ENCODE measurements at regions of chr1 and their contacts with region 1.

Region 1: DNA sequence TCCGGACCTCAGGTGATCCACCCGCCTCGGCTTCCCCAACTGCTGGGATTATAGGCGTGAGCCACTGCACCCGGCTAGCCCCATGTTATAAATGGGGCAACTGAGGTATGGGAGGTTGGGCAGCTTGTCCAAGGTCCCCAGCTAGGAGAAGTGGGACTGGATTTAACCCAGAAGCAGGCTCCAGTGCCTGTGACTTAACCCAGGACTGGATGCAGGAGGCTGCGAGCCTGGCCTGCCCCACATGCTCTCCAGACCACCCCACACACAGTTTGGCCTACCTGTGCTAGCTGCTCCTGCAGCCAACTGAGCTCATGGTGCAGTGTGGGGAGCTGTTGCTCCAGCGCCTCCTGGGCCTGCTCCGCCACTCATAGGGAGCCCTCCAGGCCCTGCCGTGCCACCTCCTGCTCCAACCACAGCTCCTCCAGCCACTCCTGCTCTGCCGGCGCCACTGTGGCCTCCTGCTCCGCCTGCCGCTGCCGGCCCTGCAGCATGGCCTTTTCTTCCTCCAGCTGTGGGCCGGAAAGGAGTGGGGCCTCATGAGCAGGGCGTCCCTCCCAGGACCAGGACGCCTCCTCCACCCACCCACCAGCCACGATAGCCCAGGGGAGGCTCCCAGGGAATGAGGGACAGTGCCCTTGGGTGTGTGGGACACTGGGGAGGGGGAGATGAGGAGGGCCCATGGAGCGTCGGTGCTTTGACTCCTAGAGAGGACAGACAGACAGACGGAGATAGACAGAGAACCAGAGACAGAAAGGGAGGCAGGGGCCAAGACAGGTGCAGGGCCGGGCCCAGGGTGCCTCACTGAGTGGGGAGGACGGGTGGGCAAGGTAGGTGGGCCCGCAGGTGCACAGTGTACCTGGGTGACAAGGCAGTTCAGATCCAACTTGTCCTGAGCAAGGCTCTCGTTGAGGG is 12.4 kb upstream of the NBPF1 start:
- DNase-seq: peak in 1 of 2 experiments; percentile 15
- H3K4me3 ChIP-seq: no peak overlapping the region
- H3K4me1 ChIP-seq: peaks cover 1% of the 10 kb centered on the region; the same call in 1 of the 2 replicates
- H3K27me3 ChIP-seq: no peaks in the 10 kb centered on the region

Region 2: DNA sequence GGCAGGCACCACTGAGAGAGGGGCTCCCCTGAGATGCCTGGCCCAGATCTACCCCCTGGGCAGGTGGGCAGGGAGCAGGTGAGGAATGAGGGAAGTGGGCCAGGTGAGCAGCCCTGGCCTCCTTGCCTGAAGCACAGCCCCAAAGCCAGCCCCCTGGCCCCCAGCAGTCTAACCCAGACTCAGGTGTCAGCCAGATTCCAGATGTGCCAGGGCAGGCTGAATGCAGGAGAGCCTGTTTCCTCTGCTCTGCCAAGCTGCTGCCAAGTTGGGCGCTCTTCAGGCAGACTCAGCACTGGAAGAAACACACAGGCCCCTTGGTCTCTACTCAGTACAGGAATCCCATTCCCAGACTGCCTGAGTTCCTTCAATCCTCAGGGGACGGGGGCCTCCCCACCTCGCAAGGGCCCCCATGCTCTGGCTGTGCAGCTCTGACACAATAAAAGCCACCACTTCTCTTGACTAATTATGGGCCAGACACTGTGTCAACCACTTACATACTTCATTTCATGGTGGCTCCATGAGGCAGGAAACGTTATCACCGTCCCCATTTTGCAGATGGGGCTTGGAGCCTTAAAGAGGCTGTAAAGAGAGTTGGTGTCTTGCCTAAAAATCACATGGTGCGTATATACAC is 433.7 kb before region 1 on chr1:
- in situ Hi-C with region 1: no loop called
- DNase-seq: no peak
- H3K4me3 ChIP-seq: no peak overlapping the region
- H3K4me1 ChIP-seq: peaks cover 2% of the 10 kb centered on the region; the same call in 1 of the 2 replicates
- H3K27me3 ChIP-seq: 0 out of 2 replicates have a peak, but pooled peaks cover 3% of the 10 kb centered on the region

Region 3: DNA sequence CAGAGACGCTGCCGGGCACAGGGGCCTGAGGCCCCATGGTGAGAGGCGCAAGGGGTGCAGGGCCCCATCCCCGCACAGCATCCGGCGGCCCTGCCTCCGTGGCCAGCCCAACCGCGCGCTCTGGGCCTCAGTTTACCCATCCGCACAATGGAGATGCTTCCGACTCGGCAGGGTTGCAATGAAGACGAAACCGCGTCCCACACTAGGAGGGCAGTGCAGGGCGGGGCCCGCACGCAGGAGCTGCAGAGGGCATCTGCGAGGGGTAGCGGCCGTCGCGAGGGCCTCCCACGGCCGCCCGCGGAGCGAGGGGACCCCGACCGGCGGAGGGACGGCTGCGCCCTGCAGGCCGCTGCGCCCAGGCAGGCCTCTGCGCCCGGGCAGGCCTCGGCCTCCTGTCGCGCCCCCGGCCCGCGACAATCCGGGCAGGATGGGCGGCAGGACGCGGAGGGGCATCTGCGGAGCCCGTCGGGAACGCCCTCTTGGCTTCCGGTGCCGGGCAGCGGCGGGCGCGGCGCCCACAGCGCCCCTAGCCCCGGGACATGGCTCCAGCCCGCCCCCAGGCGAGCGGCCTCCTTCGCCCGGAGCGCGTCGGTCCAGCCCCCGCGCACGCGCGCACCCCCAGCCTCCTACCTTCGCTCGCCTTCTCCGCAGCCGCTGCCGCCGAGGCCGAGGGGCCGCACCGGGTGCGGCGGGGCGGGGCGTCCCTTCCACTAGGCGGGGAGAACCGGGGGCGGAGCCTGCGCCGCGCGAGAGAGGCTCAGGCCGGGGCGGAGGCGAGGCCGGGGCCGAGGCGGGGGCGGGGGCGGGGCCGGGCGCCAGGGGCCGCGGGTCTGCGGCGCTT is 127.0 kb before region 1 on chr1:
- in situ Hi-C with region 1: loop called (anchors 10 kb)
- DNase-seq: peak; percentile 76 to 95
- H3K4me3 ChIP-seq: peak overlapping the region; percentile 53
- H3K4me1 ChIP-seq: peaks cover 5% of the 10 kb centered on the region; the same call in 1 of the 2 replicates
- H3K27me3 ChIP-seq: no peaks in the 10 kb centered on the region

Region 4: GRCh38 chr1:17045634-17046333 is 420.0 kb after region 1 on chr1:
- in situ Hi-C with region 1: loop called (anchors 10 kb)
- DNase-seq: peak; percentile 23 to 81
- H3K4me3 ChIP-seq: 0 out of 2 replicates have a peak overlapping the region, but pooled peaks have one; percentile 2
- H3K4me1 ChIP-seq: peaks cover 6% of the 10 kb centered on the region
- H3K27me3 ChIP-seq: no peaks in the 10 kb centered on the region